Endothelial cell of umbilical vein (primary cell): ENCODE measurements at regions of chr2 and their contacts with region 1.

Region 1: GRCh38 chr2:10072656-10073480 is 7.3 kb downstream of the CYS1 start:
- DNase-seq: peak; percentile 76
- H3K4me3 ChIP-seq: no peak overlapping the region
- H3K27ac ChIP-seq: no peak overlapping the region
- H3K4me1 ChIP-seq: no peaks in the 10 kb centered on the region
- H3K27me3 ChIP-seq: peaks cover 11 to 14% of the 10 kb centered on the region in 2 experiments
- CTCF ChIP-seq: peak; percentile 87 to 90
- POLR2A ChIP-seq: no peak

Region 2: DNA sequence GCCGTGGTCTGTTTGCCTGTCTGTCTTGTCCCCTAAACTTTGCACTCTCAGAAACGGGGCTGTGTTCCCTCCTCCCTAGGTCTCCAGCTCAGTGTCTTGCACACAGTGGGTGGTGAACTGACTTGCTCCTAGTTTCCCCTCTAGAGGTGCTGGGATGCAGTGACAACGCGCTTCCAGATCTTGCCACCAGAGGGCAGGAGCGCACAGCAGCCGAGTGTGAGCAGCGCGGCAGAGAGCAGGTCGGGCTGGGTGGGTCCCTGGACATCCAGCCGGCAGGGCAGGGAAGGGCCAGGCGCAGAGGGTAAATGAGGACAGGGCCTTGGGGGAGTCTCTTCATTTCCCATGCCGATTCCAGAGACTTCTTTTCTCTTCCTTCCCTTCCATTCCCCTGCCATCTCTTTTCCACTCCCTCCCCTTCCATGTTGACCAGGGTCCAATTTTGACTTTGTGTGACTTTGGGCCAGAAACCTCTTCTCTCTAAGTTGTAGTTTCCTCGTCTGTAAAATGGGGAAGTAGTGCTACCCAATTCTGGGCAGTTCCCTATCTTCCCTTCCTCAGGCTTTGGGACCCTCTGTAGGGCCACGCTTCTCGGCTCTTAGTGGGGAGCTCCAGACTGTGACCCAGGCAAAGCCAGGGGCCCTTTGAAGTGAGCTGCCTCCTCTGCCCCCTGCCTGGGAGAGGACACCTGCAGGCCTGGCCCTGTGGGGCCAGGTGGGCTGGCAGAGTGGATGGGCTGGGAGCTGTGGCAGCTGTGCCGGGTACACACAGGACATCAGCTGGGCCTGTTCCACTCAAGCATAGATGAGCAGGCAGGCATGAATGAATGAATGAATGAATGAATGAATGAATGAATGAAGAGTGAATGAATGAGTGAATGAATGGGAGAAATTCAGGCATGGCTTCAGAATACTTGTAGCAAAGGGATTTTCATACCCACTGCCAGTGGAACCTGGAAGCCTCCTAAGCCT is 272.9 kb before region 1 on chr2:
- CTCF ChIA-PET with region 1: interaction called, 16 read pairs
- POLR2A ChIA-PET with region 1: no interaction called
- dilution Hi-C with region 1: no loop called
- intact Hi-C with region 1: no loop called
- DNase-seq: peak; percentile 82
- H3K4me3 ChIP-seq: no peak overlapping the region
- H3K27ac ChIP-seq: no peak overlapping the region
- H3K4me1 ChIP-seq: no peaks in the 10 kb centered on the region
- H3K27me3 ChIP-seq: no peaks in the 10 kb centered on the region
- CTCF ChIP-seq: peak; percentile 96 to 99
- POLR2A ChIP-seq: no peak

Region 3: GRCh38 chr2:9941196-9941995 is 131.5 kb before region 1 on chr2:
- CTCF ChIA-PET with region 1: no interaction called
- POLR2A ChIA-PET with region 1: no interaction called
- dilution Hi-C with region 1: no loop called
- intact Hi-C with region 1: no loop called
- DNase-seq: no peak
- H3K4me3 ChIP-seq: no peak overlapping the region
- H3K27ac ChIP-seq: no peak overlapping the region
- H3K4me1 ChIP-seq: no peaks in the 10 kb centered on the region
- H3K27me3 ChIP-seq: peaks cover 11 to 14% of the 10 kb centered on the region in 2 experiments
- CTCF ChIP-seq: no peak
- POLR2A ChIP-seq: no peak

Region 4: DNA sequence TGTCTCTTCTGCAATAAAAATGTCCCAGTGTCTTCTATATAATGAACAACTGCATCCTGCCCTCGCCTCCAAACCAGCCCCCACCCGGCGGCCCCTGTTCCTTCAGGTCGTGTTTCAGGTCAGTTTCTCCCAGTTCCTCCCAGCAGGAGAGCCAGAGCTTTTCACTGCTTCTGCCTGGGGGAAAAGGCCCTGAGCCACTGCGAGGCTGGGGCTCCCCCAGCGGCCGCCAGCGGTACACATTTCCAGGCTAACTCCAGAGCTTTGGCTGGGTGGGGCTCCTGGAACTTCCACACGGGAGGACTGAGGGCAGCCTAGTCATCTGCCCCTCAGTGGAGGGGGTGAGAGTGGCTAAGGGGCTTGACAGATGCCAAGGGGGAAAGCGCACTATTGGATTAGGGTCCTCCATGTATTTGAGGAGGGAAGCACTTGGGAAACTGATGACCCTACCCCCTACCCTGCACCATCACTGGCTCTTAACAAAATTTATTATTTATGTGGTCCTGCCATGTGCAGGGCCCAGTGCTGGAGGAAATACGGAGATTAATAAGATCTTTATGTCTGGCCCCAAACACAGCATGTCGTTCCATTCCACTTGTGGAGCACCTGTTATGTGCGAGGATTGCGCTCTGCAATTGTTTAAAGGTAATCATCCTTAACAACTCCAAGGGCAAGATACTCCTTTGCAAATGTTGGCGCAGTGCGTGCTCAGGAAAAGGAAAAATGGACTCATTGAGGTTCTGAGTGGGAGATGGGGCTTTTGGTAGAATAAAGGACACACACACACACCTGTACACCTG is 24.7 kb after region 1 on chr2:
- CTCF ChIA-PET with region 1: interaction called, 485 read pairs
- POLR2A ChIA-PET with region 1: no interaction called
- dilution Hi-C with region 1: no loop called
- intact Hi-C with region 1: loop called (anchors 1 kb)
- DNase-seq: peak; percentile 54
- H3K4me3 ChIP-seq: no peak overlapping the region
- H3K27ac ChIP-seq: no peak overlapping the region
- H3K4me1 ChIP-seq: no peaks in the 10 kb centered on the region
- H3K27me3 ChIP-seq: peaks cover 0 to 1% of the 10 kb centered on the region in 2 experiments
- CTCF ChIP-seq: peak; percentile 87 to 95
- POLR2A ChIP-seq: no peak

Region 5: DNA sequence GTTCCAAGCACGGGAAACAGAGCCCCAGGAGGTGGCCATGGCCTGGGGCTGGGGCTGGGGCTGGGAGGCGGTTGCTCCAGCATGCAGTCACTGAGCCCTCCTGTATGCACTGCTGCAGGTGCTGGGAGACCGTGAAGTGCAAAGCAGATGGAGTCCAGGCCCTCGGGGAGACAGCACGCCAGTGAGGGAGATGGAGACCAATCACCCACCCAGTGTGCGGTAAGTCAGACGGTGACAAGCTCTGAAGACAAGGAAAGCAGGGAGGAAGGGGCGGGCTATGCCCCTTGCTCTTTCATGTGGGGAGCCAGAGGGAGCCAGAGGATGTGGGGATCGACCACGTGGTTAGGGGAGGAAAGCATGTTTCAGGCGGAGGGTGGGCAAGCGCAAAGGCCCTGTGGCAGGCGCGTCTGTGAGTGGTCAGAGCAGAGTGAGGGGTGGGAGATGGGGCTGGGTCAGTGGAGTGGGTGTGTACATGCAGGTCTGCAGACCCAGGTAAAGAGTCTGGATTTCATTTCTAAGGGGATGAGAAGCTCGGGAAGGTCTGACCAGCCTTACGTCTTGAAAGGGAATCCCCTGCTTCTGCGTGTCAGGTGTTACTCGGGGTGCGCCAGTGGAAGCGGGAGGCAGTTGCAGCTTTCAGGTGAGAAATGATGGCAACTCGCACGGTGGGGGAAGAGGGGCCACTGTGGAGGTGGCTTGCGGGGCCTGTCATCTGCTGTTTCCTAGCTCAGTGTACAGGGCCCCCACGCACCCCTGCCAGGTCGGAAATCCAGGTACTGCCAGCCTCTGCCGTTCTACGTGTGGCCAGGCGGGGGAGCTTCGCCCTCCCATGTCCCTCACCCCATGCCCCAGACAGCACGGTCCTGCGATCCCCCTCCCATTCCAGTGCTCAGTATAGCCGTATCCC is 69.1 kb after region 1 on chr2:
- CTCF ChIA-PET with region 1: interaction called, 11 read pairs
- POLR2A ChIA-PET with region 1: no interaction called
- dilution Hi-C with region 1: no loop called
- intact Hi-C with region 1: no loop called
- DNase-seq: no peak
- H3K4me3 ChIP-seq: no peak overlapping the region
- H3K27ac ChIP-seq: no peak overlapping the region
- H3K4me1 ChIP-seq: no peaks in the 10 kb centered on the region
- H3K27me3 ChIP-seq: no peaks in the 10 kb centered on the region
- CTCF ChIP-seq: peak; percentile 50 to 65
- POLR2A ChIP-seq: no peak

Region 6: DNA sequence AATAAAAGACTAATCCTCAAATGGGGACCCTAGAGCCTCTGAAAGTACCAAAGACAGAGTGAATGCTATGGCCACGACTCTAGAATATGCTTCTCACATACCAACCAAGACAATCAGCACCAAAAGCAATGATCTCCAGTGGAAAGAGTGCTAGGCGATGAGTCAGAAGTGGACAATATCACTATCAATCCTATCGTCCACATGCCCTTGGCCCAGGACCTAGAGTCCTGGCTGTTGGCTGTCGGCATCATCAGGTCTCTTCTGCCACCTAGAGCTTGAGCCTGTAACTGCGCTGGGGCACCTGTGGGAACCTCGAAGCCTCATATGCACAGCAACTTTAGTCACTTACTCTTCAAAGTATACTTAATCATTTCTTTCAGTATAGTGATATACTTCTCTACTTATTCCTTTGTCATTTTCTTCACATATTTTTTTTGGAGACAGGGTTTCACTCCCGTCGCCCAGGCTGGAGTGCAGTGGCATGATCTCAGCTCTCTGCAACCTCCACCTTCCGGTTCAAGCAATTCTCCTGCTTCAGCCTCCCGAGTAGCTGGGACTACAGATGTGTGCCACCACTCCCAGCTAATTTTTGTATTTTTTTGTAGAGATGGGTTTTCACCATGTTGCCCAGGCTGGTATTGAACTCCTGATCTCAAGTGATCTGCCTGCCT is 587.2 kb after region 1 on chr2:
- CTCF ChIA-PET with region 1: interaction called, 25 read pairs
- POLR2A ChIA-PET with region 1: no interaction called
- dilution Hi-C with region 1: no loop called
- intact Hi-C with region 1: loop called (anchors 1 kb)
- DNase-seq: peak; percentile 74
- H3K4me3 ChIP-seq: no peak overlapping the region
- H3K27ac ChIP-seq: no peak overlapping the region
- H3K4me1 ChIP-seq: peaks cover 4% of the 10 kb centered on the region
- H3K27me3 ChIP-seq: no peaks in the 10 kb centered on the region
- CTCF ChIP-seq: peak; percentile 79 to 81
- POLR2A ChIP-seq: no peak